Common myeloid progenitor, CD34-positive (primary cell): ENCODE measurements at regions of chr16 and their contacts with region 1.

Region 1: DNA sequence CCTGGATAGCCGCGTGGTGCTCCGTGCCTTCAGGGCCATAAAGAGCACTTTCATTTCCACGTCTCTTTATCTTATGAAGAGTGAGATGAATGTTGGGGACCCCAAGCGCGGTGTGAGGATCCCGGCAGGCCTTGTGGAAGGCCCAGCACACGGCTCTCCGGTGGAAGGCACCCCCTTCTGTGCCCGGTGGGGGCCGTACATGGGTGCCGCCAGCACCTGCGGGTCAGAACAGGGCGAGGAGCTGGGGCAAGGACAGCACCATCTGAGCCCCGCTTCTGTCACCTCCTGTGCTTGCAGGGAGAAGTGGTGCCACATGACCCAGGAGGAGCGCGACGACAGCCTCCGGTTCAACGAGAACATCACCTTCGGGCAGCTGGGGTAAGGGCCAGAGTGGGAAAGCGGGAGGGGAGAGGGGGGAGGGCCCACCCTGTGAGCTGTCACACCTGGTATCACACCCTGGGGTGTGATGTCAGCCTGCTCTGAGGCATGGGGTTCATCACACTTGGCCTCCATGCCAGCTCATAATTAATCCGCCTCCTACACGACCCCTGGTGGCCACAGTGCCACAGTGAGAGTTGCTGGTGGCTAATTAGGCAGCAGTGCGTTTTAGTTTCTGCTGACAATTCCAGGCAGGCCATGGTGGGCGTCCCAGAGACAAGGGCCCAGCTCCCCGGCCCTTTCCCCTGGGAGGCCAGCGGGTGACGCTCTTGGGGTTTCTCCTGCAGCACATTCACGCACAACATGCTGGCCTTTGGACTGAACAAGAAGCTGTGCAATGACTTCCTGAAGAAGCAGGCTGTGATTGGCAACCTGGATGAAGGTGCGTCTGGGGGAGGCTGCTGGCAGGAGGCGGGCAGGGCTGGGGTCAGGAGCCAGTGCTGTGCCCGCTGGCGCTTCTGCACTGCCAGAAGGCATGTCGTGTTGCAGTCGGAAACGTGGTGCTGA is 25.7 kb downstream of the CIBAR2 start:
- DNase-seq: peak; percentile 67 to 87 (median 83)
- H3K4me3 ChIP-seq: no peak overlapping the region
- H3K27ac ChIP-seq: no peak overlapping the region
- H3K4me1 ChIP-seq: peaks cover 0 to 58% (median 28%) of the 10 kb centered on the region in 4 experiments
- H3K27me3 ChIP-seq: peaks cover 0 to 8% (median 0%) of the 10 kb centered on the region in 5 experiments

Region 2: GRCh38 chr16:84976644-84977400 is 109.8 kb before region 1 on chr16:
- CTCF ChIA-PET with region 1: interaction called, 10 read pairs
- POLR2A ChIA-PET with region 1: interaction called, 6 read pairs
- DNase-seq: no peak
- H3K4me3 ChIP-seq: no peak overlapping the region
- H3K27ac ChIP-seq: no peak overlapping the region
- H3K4me1 ChIP-seq: peaks cover 0 to 8% (median 2%) of the 10 kb centered on the region in 4 experiments
- H3K27me3 ChIP-seq: no peaks in the 10 kb centered on the region

Region 3: DNA sequence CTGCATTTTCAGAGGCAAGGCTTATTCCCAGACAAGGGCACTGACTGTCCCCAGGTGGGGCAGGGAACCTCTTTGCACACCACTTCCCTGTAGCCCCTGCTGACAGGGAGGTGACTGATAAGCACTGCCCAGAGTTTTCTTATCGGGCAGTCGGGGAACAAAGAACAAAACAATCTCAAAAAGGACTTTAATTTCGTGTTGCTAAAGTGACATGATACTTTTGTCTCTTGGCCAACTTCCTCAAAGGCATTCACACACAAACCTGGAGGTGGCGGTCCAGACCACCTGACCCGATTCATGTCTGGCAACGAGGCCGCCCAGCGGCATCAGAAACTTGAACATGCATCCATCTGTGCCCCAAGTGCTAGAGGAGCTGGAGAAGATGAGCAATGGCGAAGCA is 104.2 kb before region 1 on chr16:
- CTCF ChIA-PET with region 1: interaction called, 11 read pairs
- POLR2A ChIA-PET with region 1: no interaction called
- DNase-seq: peak; percentile 39 to 80 (median 77)
- H3K4me3 ChIP-seq: no peak overlapping the region
- H3K27ac ChIP-seq: no peak overlapping the region
- H3K4me1 ChIP-seq: peaks cover 0 to 14% (median 6%) of the 10 kb centered on the region in 4 experiments
- H3K27me3 ChIP-seq: no peaks in the 10 kb centered on the region

Region 4: DNA sequence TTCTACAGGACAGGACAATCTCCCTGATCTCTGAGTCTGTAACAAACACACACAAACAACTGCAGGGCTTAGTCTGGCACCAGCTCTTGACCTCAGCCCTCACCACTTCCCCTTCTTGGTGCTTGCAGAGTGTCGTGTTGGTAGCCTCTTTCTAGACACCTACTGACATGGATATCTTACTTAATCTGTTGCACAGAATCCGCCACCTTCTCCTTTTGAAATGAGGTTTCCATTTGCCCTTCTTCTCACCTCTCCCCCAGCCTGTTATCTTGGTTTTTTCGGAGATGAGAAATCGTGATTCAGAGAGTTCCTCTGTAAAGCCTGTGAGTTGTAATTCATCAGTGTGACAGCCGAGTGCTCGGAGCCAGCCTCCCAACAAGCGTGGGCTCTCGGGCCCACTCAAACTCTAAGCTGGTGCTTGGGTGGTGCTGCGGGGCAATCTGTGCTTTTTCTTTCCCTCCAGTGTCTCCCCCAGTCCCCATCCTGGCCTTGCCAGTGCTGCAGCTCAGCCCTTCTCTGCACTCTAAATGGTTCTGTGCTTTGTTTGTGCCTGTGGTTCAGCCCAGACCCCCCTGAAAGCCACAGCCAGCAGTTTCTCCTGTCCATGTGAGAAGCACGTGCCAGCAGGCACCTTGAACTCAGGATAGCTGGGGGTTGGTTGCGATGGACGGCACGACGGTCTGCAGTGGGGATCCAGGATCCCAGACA is 31.0 kb before region 1 on chr16:
- CTCF ChIA-PET with region 1: interaction called, 26 read pairs
- POLR2A ChIA-PET with region 1: no interaction called
- DNase-seq: peak; percentile 94 to 100 (median 99)
- H3K4me3 ChIP-seq: peak overlapping the region in 5 of 7 experiments; percentile 11 to 68 (median 53)
- H3K27ac ChIP-seq: peak overlapping the region in 1 of 2 experiments; percentile 71
- H3K4me1 ChIP-seq: peaks cover 12 to 45% (median 42%) of the 10 kb centered on the region in 4 experiments
- H3K27me3 ChIP-seq: no peaks in the 10 kb centered on the region

Region 5: DNA sequence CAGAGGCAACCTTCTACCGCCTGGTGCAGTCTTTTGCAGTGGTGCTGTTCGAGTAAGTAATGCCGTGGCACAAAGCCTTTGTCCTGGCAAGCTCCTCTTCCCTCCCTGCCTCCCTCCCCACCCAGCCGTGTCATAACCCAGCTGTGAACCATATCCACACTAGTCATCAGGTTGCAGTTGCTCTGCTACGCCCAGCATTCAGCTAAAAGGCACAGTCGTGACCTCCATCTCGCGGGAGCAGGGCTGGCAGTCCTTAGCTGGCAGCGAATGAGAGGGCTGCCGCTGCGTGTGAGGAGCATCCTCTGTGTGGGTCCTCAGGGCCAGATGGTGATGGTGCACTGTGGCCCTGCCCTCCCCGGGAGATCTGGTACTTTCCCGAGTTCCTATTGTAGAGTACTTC is 13.7 kb before region 1 on chr16:
- CTCF ChIA-PET with region 1: interaction called, 26 read pairs
- POLR2A ChIA-PET with region 1: no interaction called
- DNase-seq: peak in 1 of 3 donors; percentile 15
- H3K4me3 ChIP-seq: no peak overlapping the region
- H3K27ac ChIP-seq: no peak overlapping the region
- H3K4me1 ChIP-seq: peaks cover 0 to 24% (median 21%) of the 10 kb centered on the region in 4 experiments
- H3K27me3 ChIP-seq: no peaks in the 10 kb centered on the region

Region 6: GRCh38 chr16:85098565-85098964 is 11.9 kb after region 1 on chr16:
- CTCF ChIA-PET with region 1: interaction called, 18 read pairs
- POLR2A ChIA-PET with region 1: no interaction called
- DNase-seq: no peak
- H3K4me3 ChIP-seq: no peak overlapping the region
- H3K27ac ChIP-seq: no peak overlapping the region
- H3K4me1 ChIP-seq: peaks cover 0 to 12% (median 1%) of the 10 kb centered on the region in 4 experiments
- H3K27me3 ChIP-seq: no peaks in the 10 kb centered on the region